ENCODE measurements at regions of chrX and their contacts with region 1.

Region 1: GRCh38 chrX:108131471-108131870 is 39.9 kb downstream of the ATG4A start:
- DNase-seq: no peak
- H3K4me3 ChIP-seq: no peak overlapping the region
- H3K27ac ChIP-seq: no peak overlapping the region
- H3K4me1 ChIP-seq: no peaks in the 10 kb centered on the region
- H3K27me3 ChIP-seq: no peaks in the 10 kb centered on the region
- CTCF ChIP-seq: no peak
- POLR2A ChIP-seq: no peak

Region 2: DNA sequence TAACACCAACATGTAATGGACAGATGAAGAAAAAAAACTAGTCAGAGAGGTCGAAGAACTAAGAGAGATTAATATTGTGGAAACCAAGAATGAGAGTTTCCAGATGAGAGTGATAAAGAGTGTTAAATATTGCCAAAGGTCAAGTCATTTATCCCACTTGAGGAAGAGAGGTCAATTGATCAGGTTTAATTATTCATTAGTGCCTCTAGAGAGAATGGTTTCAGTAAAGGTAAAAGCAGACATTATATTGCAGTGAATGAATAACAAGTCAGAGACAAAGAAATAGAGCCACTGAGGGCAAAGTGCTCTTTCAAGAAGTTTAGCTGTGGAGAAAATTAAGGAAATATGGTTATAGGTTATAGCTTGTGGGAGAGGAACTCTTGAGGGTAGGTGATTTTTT is 1087.3 kb after region 1 on chrX:
- intact Hi-C with region 1: loop called (anchors 5 kb)
- DNase-seq: no peak
- H3K4me3 ChIP-seq: no peak overlapping the region
- H3K27ac ChIP-seq: no peak overlapping the region
- H3K4me1 ChIP-seq: no peaks in the 10 kb centered on the region
- H3K27me3 ChIP-seq: no peaks in the 10 kb centered on the region
- CTCF ChIP-seq: no peak
- POLR2A ChIP-seq: no peak

Measured in vagina (tissue), 2 donors.